ENCODE measurements at regions of chr19 and their contacts with region 1.

Region 1: DNA sequence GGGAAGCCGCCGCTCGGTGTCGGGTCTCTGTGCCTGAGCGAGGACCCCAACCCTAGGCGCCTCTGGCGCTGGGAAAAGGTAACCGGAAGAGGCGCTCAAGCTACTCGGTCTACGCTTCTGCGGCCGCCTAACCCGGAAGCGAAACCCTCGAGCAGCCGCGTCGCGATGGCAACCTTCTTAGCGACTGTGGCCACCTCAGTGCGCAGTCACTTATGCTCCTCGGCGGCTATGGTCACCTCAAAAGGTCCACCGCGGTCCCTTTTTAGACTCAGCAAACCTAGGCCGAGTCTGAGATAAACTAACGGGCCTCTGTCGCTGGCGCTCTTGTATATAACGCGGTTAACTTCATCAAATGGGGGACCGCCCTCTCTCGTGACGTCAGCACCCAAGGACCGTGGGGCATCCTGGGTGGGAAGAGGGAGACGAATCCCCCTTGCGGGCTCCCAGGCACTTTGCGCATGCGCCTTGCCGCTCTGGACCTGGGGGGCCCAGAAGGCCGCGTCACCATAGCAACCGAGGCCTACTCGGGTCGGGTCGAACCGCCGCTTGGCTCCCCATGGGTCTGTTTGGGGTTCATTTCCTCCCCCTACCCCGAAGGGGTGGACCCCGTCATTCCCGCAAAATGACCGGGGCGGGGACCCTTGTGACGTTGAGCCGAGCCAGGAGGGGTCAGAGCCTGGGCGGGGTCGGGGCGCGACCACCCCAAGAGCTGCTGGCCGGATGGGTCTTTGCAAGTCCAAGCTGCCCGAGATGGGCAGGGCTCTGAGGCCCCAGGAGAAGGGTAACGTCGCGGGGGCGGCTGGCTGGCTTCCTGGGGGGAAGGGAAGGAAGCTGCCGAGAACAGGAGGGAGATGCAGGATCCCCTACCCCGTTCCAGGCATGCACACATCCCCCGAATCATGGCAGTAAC is at the start of gene GTF2F1:
- DNase-seq: peak; percentile 89 to 98 (median 95)
- ATAC-seq: peak; percentile 84
- H3K4me3 ChIP-seq: peak within 1 kb of the TSS; percentile 89 to 97
- H3K4me3 Mint-ChIP-seq: peak within 1 kb of the TSS; percentile 88
- H3K27ac ChIP-seq: peak within 1 kb of the TSS; percentile 98 to 100
- H3K27ac Mint-ChIP-seq: peak within 1 kb of the TSS; percentile 98
- H3K4me1 ChIP-seq: peaks cover 16% of the 10 kb centered on the region
- H3K4me1 Mint-ChIP-seq: peaks cover 25% of the 10 kb centered on the region
- H3K27me3 ChIP-seq: no peaks in the 10 kb centered on the region
- H3K27me3 Mint-ChIP-seq: no peaks in the 10 kb centered on the region
- CTCF ChIP-seq: no peak
- total RNA-seq, gene GTF2F1: 65.2 to 67.9 TPM

Region 2: GRCh38 chr19:6199240-6199983 is 193.9 kb before region 1 on chr19:
- CTCF ChIA-PET with region 1: no interaction called
- POLR2A ChIA-PET with region 1: no interaction called
- intact Hi-C with region 1: loop called in 1 of 2 experiments (anchors 1 kb)
- DNase-seq: peak; percentile 98 to 100 (median 100)
- ATAC-seq: peak; percentile 90
- H3K4me3 ChIP-seq: peak overlapping the region; percentile 80 to 99
- H3K4me3 Mint-ChIP-seq: peak overlapping the region; percentile 94
- H3K27ac ChIP-seq: peak overlapping the region; percentile 65 to 73
- H3K27ac Mint-ChIP-seq: peak overlapping the region; percentile 87
- H3K4me1 ChIP-seq: peaks cover 11% of the 10 kb centered on the region
- H3K4me1 Mint-ChIP-seq: peaks cover 10% of the 10 kb centered on the region
- H3K27me3 ChIP-seq: no peaks in the 10 kb centered on the region
- H3K27me3 Mint-ChIP-seq: peaks cover 3% of the 10 kb centered on the region
- CTCF ChIP-seq: peak; percentile 51

Region 3: GRCh38 chr19:6362027-6362350 is 31.3 kb before region 1 on chr19:
- CTCF ChIA-PET with region 1: no interaction called
- POLR2A ChIA-PET with region 1: interaction called, 3 read pairs
- intact Hi-C with region 1: loop called (anchors 1 kb)
- DNase-seq: no peak
- ATAC-seq: peak; percentile 1
- H3K4me3 ChIP-seq: peak overlapping the region; percentile 78 to 79
- H3K4me3 Mint-ChIP-seq: peak overlapping the region; percentile 93
- H3K27ac ChIP-seq: peak overlapping the region; percentile 72 to 85
- H3K27ac Mint-ChIP-seq: peak overlapping the region; percentile 94
- H3K4me1 ChIP-seq: peaks cover 21% of the 10 kb centered on the region
- H3K4me1 Mint-ChIP-seq: peaks cover 25% of the 10 kb centered on the region
- H3K27me3 ChIP-seq: no peaks in the 10 kb centered on the region
- H3K27me3 Mint-ChIP-seq: no peaks in the 10 kb centered on the region
- CTCF ChIP-seq: no peak

Region 4: DNA sequence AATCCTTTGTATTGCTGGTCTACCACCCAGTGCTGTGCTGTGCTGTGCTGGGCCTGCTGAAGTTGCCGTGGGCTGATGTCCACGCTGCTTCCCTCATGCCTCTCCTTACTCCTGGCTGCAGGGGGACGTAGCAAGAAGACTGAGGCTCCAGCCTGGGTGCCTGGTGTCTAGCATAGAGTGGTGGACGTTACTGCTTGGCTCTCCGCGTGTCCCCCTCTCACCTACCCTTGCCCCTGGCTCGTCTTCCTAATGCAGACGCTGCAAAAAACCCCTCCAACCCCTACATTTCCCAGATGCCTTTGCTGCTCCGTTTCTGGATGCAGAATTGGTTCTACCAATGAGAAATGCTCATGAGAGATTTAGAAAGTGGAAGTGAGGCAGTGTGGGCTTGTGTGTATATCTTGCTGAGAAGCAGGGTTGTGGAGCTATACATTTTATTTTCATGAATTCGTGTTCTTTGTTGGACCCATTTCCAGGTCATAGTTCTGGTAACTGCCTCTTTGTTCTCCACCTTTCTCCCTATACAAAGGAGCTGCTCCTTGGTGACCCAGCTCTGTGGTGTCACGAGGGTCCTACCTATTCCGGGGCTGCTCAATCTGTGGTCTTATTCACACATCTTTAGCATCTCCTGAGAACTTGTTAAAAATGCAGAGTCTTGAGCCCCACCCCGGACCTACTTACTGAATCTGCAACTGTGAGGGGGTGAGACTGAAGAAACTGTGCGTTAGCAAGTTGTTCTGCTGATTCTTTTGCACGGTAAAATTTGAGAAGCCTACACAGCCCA is 96.1 kb after region 1 on chr19:
- CTCF ChIA-PET with region 1: no interaction called
- POLR2A ChIA-PET with region 1: no interaction called
- intact Hi-C with region 1: no loop called
- DNase-seq: peak in 2 of 9 experiments; percentile 29 to 54
- ATAC-seq: no peak
- H3K4me3 ChIP-seq: peak overlapping the region; percentile 24 to 41
- H3K4me3 Mint-ChIP-seq: peak overlapping the region; percentile 74
- H3K27ac ChIP-seq: peak overlapping the region in 1 of 2 experiments; percentile 71
- H3K27ac Mint-ChIP-seq: peak overlapping the region; percentile 74
- H3K4me1 ChIP-seq: peaks cover 4% of the 10 kb centered on the region
- H3K4me1 Mint-ChIP-seq: peaks cover 13% of the 10 kb centered on the region
- H3K27me3 ChIP-seq: no peaks in the 10 kb centered on the region
- H3K27me3 Mint-ChIP-seq: no peaks in the 10 kb centered on the region
- CTCF ChIP-seq: no peak

Region 5: GRCh38 chr19:6674868-6675305 is 281.6 kb after region 1 on chr19:
- CTCF ChIA-PET with region 1: no interaction called
- POLR2A ChIA-PET with region 1: no interaction called
- intact Hi-C with region 1: no loop called
- DNase-seq: peak; percentile 56 to 93 (median 86)
- ATAC-seq: peak; percentile 67
- H3K4me3 ChIP-seq: peak overlapping the region in 1 of 2 experiments; percentile 31
- H3K4me3 Mint-ChIP-seq: peak overlapping the region; percentile 50
- H3K27ac ChIP-seq: peak overlapping the region in 1 of 2 experiments; percentile 6
- H3K27ac Mint-ChIP-seq: peak overlapping the region; percentile 84
- H3K4me1 ChIP-seq: peaks cover 33% of the 10 kb centered on the region
- H3K4me1 Mint-ChIP-seq: peaks cover 45% of the 10 kb centered on the region
- H3K27me3 ChIP-seq: no peaks in the 10 kb centered on the region
- H3K27me3 Mint-ChIP-seq: no peaks in the 10 kb centered on the region
- CTCF ChIP-seq: no peak

Region 6: GRCh38 chr19:7373862-7374261 is 980.5 kb after region 1 on chr19:
- CTCF ChIA-PET with region 1: no interaction called
- POLR2A ChIA-PET with region 1: no interaction called
- intact Hi-C with region 1: no loop called
- DNase-seq: no peak
- ATAC-seq: no peak
- H3K4me3 ChIP-seq: no peak overlapping the region
- H3K4me3 Mint-ChIP-seq: no peak overlapping the region
- H3K27ac ChIP-seq: no peak overlapping the region
- H3K27ac Mint-ChIP-seq: no peak overlapping the region
- H3K4me1 ChIP-seq: no peaks in the 10 kb centered on the region
- H3K4me1 Mint-ChIP-seq: peaks cover 4% of the 10 kb centered on the region
- H3K27me3 ChIP-seq: no peaks in the 10 kb centered on the region
- H3K27me3 Mint-ChIP-seq: no peaks in the 10 kb centered on the region
- CTCF ChIP-seq: no peak

Measured in CD8-positive, alpha-beta T cell (primary cell).